Ovary (tissue), 10 donors: ENCODE measurements at regions of chr2 and their contacts with region 1.

Region 1: GRCh38 chr2:46887028-46887885 is 28.3 kb downstream of the MCFD2 start:
- DNase-seq: no peak
- H3K4me3 ChIP-seq: no peak overlapping the region
- H3K27ac ChIP-seq: no peak overlapping the region
- H3K4me1 ChIP-seq: peaks cover under 1% of the 10 kb centered on the region
- H3K27me3 ChIP-seq: no peaks in the 10 kb centered on the region
- CTCF ChIP-seq: no peak
- EP300 ChIP-seq: no peak
- POLR2A ChIP-seq: no peak

Region 2: GRCh38 chr2:46461011-46461674 is 426.1 kb before region 1 on chr2:
- intact Hi-C with region 1: loop called in 3 of 4 experiments (anchors 2 to 5 kb)
- DNase-seq: peak; percentile 69 to 88 (median 86)
- H3K4me3 ChIP-seq: no peak overlapping the region
- H3K27ac ChIP-seq: peak overlapping the region in 1 of 2 donors; percentile 27
- H3K4me1 ChIP-seq: peaks cover 5% of the 10 kb centered on the region
- H3K27me3 ChIP-seq: no peaks in the 10 kb centered on the region
- CTCF ChIP-seq: peak; percentile 95 to 98 (median 95)
- EP300 ChIP-seq: no peak
- POLR2A ChIP-seq: peak; percentile 18

Region 3: GRCh38 chr2:46469116-46469515 is 418.1 kb before region 1 on chr2:
- intact Hi-C with region 1: loop called in 3 of 4 experiments (anchors 2 to 5 kb)
- DNase-seq: no peak
- H3K4me3 ChIP-seq: no peak overlapping the region
- H3K27ac ChIP-seq: no peak overlapping the region
- H3K4me1 ChIP-seq: no peaks in the 10 kb centered on the region
- H3K27me3 ChIP-seq: no peaks in the 10 kb centered on the region
- CTCF ChIP-seq: no peak
- EP300 ChIP-seq: no peak
- POLR2A ChIP-seq: no peak

Region 4: DNA sequence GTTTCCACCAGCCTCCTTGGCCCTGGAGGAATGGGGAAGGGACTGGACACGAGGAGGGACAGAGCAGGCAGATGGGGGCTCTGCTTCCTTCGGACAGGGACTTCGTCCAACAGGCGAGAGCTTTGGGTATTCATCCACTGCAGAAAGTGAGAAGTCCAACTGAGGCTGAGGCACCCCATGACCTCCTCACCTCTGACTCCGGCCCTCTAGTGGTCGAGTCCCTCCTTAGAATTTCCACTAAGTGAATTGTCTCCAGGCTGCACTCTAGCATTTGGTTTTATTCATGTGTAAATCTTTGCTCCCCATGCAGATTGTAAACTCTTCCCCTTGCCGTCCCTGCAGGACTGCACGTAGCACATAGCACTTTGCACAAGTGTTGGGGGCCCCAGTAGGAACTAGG is 332.2 kb before region 1 on chr2:
- intact Hi-C with region 1: no loop called
- DNase-seq: no peak
- H3K4me3 ChIP-seq: no peak overlapping the region
- H3K27ac ChIP-seq: no peak overlapping the region
- H3K4me1 ChIP-seq: no peaks in the 10 kb centered on the region
- H3K27me3 ChIP-seq: no peaks in the 10 kb centered on the region
- CTCF ChIP-seq: no peak
- EP300 ChIP-seq: no peak
- POLR2A ChIP-seq: no peak

Region 5: DNA sequence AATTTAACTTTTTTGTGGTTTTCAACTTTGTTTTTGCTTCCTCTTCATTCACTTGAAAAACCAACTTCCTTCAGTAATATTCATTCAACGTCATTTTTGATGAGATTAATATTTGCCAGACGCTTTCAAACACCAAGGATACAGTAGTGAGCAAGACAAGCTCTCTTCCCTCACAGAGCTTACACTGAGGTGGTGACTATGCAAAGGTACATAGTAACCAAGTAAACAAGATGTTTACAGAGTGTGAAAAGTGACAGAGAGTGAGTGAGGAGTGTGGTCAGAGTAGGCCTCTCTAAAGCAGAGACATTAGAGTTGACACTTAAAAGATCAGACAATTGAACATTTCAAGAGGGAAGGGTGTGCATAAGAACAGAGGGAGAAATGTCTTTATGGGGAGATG is 252.4 kb before region 1 on chr2:
- intact Hi-C with region 1: loop called in 1 of 4 experiments (anchors 5 kb)
- DNase-seq: no peak
- H3K4me3 ChIP-seq: no peak overlapping the region
- H3K27ac ChIP-seq: no peak overlapping the region
- H3K4me1 ChIP-seq: no peaks in the 10 kb centered on the region
- H3K27me3 ChIP-seq: no peaks in the 10 kb centered on the region
- CTCF ChIP-seq: no peak
- EP300 ChIP-seq: no peak
- POLR2A ChIP-seq: no peak

Region 6: DNA sequence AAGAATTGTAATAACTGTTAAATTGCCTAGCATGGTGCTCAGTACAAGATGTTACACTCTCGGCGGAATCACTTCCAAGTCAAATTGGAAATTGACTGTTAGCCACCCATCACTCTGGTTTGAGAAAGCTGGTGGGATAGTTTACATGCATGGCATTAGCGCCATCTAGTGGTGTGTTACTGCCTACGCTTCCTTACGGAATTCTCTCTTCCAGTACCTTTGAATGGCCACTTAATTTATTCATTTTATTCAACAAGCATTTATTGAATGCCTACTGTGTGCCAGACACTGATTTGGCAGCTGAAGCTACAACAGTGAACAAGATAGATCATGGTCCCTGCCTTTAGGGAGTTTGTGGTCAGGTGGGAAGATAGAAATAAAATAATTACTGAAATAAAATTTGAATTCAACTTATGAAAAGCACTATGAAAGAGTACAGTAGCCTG is 236.7 kb before region 1 on chr2:
- intact Hi-C with region 1: loop called in 1 of 4 experiments (anchors 5 kb)
- DNase-seq: peak in 4 of 5 donors; percentile 47 to 82 (median 68)
- H3K4me3 ChIP-seq: no peak overlapping the region
- H3K27ac ChIP-seq: no peak overlapping the region
- H3K4me1 ChIP-seq: peaks cover 2% of the 10 kb centered on the region
- H3K27me3 ChIP-seq: no peaks in the 10 kb centered on the region
- CTCF ChIP-seq: peak; percentile 88 to 92 (median 91)
- EP300 ChIP-seq: no peak
- POLR2A ChIP-seq: no peak

Region 7: GRCh38 chr2:47127862-47128543 is 240.7 kb after region 1 on chr2:
- intact Hi-C with region 1: no loop called
- DNase-seq: no peak
- H3K4me3 ChIP-seq: no peak overlapping the region
- H3K27ac ChIP-seq: no peak overlapping the region
- H3K4me1 ChIP-seq: no peaks in the 10 kb centered on the region
- H3K27me3 ChIP-seq: no peaks in the 10 kb centered on the region
- CTCF ChIP-seq: no peak
- EP300 ChIP-seq: no peak
- POLR2A ChIP-seq: no peak